BJ (cell line): ENCODE measurements at regions of chr14 and their contacts with region 1.

Region 1: GRCh38 chr14:74290415-74290814 is 12.3 kb downstream of the ABCD4 start:
- DNase-seq: no peak
- H3K4me3 ChIP-seq: no peak overlapping the region
- H3K27me3 ChIP-seq: no peaks in the 10 kb centered on the region
- CTCF ChIP-seq: peak; percentile 53

Region 2: GRCh38 chr14:74237441-74237840 is 53.0 kb before region 1 on chr14:
- CTCF ChIA-PET with region 1: no interaction called
- POLR2A ChIA-PET with region 1: no interaction called
- DNase-seq: no peak
- H3K4me3 ChIP-seq: no peak overlapping the region
- H3K27me3 ChIP-seq: peaks cover 56% of the 10 kb centered on the region
- CTCF ChIP-seq: no peak

Region 3: DNA sequence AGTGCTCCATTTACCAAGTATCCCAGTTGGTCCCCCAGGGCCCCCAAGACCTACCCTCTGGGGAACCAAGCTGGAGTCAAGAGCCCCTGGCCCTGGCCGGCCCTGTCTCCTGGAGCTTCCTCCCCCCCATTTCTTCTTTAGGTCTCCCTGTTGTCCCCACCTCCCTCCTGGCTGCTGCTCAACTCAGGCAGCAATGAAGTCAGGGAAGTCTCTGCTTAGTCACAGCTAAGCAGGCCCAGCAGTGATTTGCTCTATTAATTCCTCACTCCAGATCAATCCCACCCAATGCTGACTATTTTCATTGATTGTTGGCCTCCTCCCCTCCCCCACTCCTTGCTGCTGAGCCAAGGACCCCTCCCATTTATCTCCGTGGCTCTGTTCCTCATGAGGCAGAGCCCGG is 22.8 kb before region 1 on chr14:
- CTCF ChIA-PET with region 1: interaction called, 10 read pairs
- POLR2A ChIA-PET with region 1: no interaction called
- DNase-seq: no peak
- H3K4me3 ChIP-seq: no peak overlapping the region
- H3K27me3 ChIP-seq: peaks cover 3% of the 10 kb centered on the region
- CTCF ChIP-seq: no peak

Region 4: GRCh38 chr14:74275241-74275841 is 15.1 kb before region 1 on chr14:
- CTCF ChIA-PET with region 1: interaction called, 30 read pairs
- POLR2A ChIA-PET with region 1: no interaction called
- DNase-seq: no peak
- H3K4me3 ChIP-seq: no peak overlapping the region
- H3K27me3 ChIP-seq: no peaks in the 10 kb centered on the region
- CTCF ChIP-seq: no peak

Region 5: DNA sequence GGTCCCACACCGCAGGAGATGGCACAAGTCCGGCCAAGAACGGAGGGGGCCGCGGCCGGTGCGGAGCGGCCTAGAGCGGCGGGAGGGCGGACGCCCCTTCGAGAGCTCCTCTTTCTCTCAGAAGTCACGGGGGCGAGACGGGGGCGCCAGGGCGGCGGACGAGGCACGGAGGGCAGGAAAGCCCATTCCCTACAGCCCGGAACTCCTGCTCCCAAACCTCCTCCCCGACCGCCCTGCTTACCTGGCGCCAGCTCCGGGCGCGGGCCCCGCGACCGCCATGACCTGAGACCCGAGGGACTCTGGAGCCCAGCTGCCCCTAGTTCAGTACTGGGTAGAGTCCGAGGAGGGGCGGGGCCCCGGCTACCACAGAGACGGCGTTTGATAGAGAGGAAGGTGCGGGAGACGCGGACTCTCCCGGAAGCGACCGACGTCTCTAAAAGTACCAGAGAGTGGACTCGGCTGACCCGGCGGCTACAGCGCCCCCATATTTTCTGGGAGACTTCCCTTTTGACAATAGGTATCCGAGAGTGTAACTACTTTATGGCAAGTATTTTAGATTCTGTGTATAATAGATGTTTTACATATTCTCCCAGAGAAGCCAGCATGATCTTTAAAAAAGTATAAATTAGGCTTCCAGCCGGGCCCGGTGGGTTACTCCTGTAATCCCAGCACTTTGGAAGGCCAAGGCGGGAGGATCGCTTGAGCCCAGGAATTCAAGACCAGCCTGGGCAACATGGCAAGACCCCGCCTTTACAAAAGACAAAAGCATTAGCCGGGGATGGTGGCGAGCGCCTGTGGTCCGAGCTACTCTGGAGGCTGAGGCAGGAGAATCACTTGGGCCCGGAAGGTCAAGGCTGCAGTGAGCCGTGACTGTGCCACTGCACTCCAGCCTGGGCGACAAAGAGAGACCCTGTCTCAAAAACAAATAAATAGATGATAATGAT is 12.5 kb after region 1 on chr14 and contains the start of gene ABCD4:
- CTCF ChIA-PET with region 1: interaction called, 16 read pairs
- POLR2A ChIA-PET with region 1: no interaction called
- DNase-seq: peak; percentile 54
- H3K4me3 ChIP-seq: peak within 1 kb of the TSS; percentile 91
- H3K27me3 ChIP-seq: no peaks in the 10 kb centered on the region
- CTCF ChIP-seq: peak; percentile 49
- polyA plus RNA-seq, gene ABCD4: 8.4 and 12.4 TPM in 2 replicates

Region 6: GRCh38 chr14:74414403-74415114 is 124.1 kb after region 1 on chr14:
- CTCF ChIA-PET with region 1: no interaction called
- POLR2A ChIA-PET with region 1: no interaction called
- DNase-seq: no peak
- H3K4me3 ChIP-seq: no peak overlapping the region
- H3K27me3 ChIP-seq: peaks cover 22% of the 10 kb centered on the region
- CTCF ChIP-seq: no peak

Region 7: DNA sequence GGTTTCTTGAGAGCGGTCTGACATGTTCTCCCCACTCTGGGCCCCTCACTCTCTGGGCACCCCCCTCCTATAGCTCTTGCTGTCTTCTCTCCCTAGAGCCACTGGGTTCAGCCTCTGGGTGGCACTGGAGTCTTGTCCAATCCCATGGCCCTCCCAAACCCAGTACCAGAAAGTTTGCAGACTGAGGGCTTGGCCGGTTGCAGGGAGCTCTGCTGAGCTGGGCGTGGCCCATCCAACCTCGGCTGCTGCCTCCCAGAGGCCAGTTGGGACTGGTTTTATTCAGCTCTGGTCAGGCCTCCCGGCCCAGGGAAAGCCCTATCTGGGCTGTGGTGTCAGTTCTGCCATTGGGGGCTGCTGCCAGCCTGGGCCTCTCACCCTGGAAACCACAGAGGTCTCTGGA is 241.1 kb after region 1 on chr14:
- CTCF ChIA-PET with region 1: no interaction called
- POLR2A ChIA-PET with region 1: no interaction called
- DNase-seq: no peak
- H3K4me3 ChIP-seq: no peak overlapping the region
- H3K27me3 ChIP-seq: no peaks in the 10 kb centered on the region
- CTCF ChIP-seq: no peak